GM10248 (cell line): ENCODE measurements at regions of chr11 and their contacts with region 1.

Region 1: DNA sequence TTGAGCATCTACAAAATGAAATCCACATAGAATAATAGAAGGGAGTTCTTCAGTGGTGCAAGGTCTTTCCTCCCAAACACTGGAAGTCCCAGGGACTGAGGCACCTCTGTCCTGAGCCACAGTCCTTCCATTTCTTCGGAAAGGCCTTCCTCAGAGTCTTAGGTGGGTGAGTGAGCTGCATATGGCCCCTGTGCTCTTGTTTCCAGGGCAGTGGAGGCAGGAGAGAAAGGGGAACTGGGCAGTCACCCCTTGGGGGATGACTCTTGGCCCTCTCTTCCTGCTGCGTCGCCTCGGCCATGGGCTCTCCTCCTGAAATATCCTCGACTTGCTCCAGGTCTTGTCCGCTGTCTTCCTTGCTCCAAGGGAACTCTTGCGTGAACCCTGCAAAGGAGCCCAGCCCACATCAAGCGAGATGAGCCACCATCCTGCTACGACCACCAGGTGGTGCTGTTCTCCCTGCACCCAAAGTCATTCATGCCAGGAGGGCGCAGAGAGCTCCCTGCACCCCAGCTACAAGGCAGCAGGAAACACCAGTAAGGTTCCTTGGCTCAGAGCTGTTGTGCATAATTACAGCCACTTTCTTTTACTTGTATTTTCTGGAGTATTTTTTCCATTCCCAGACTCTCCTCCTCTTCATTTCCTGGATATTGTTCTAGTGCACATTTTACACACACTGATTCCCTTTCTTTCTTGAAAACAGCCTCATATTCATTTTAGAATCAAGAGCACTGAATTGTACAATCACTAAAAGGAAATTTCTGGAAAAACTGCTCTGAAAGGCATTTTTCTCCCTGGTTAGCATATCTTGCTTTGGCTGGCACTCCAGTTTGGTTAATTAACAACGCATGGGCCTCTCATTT is 397.8 kb downstream of the OPCML start:
- DNase-seq: peak; percentile 65
- CTCF ChIP-seq: peak; percentile 90

Region 2: DNA sequence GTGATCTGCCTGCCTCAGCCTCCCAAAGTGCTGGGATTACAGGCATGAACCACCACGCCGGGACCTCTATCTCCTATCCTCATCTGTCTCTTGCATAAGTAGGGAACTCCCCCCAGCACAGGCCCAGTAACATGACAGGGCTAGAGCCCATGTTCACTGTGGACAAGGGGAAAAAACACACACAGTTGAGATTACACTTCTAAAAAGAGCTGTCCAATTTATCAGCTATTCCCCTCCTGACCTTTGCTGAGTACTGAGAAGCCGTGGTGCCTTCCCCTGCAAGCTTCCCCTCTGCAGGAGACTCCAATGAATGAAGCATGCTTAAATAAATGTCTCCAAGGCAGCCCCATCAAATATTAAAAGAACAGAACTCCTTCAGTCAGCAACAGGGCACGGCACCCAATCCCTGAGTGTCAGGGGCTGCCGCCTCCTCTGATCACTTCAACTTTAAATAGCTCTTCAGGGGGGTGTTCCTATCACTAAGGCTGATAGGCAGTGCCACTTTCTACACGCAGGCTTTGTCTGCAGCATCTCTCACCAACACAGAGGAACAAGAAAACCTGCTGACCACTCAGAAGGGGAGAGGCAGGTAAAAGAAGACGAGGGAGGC is 12.3 kb after region 1 on chr11:
- CTCF ChIA-PET with region 1: interaction called, 23 read pairs
- POLR2A ChIA-PET with region 1: no interaction called
- DNase-seq: no peak
- CTCF ChIP-seq: no peak

Region 3: DNA sequence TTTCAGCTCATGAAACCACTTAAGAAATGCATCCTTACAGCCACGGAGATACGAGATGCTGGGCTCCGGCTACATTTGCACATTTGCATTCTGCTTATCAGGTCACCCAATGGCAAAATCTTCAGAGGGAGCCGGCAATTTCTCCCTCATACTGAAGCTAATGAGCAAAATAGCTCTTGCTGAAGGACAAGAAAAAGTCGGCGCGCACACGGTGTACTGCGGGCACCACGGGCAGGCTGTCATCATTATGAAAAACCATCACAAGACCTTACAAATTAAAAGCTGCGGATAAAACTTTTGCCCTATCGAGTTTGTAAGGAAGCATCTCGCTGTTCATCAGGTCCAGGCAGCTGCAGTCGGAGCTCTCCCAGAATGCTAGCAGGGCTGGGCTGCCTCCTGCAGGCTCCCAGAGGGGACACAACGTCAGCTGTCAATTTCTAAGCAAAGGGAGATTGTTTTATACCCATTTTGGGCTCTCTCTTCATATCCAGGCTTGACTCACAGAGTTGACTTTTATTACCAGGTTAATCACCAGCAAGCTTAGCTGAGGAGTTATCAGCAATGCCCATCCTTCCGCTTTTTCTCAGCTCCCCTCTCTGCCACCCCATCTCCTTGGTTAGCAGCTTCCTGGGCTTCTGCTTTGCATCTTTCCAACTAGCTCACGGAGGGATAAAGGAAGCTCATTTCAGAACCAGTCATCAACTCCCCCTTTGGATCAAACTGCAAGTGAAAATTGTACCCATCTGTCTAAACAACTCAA is 22.6 kb after region 1 on chr11:
- CTCF ChIA-PET with region 1: interaction called, 13 read pairs
- POLR2A ChIA-PET with region 1: no interaction called
- DNase-seq: no peak
- CTCF ChIP-seq: no peak

Region 4: DNA sequence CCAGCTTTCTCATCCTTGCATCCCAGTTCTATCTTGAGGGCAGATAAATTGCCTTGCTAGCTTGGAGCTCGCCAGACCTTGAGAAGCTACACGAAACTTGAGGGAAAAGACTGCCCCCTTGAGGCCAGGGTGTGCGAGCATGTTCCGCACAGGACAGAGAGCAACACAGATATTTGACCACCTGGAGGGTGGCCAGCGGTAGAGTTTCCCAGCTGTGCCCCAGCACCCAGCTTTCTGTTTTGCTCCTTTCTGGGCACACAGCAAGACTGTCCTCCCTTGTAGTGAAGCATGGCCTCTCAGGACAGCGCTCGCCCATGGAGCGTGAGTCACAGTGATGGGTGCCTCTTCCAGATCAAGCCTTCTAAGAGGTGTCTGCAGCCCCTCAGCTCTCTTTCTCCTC is 687.2 kb after region 1 on chr11:
- CTCF ChIA-PET with region 1: interaction called, 22 read pairs
- POLR2A ChIA-PET with region 1: no interaction called
- DNase-seq: peak; percentile 68
- CTCF ChIP-seq: peak; percentile 71

Region 5: GRCh38 chr11:133834682-133835592 is 700.4 kb after region 1 on chr11:
- CTCF ChIA-PET with region 1: interaction called, 29 read pairs
- POLR2A ChIA-PET with region 1: no interaction called
- DNase-seq: peak; percentile 73
- CTCF ChIP-seq: peak; percentile 69